ENCODE measurements at regions of chr18 and their contacts with region 1.

Region 1: GRCh38 chr18:58781627-58782194 is 83.0 kb upstream of the ZNF532 start:
- DNase-seq: peak; percentile 40
- H3K4me3 Mint-ChIP-seq: no peak overlapping the region
- H3K27ac Mint-ChIP-seq: no peak overlapping the region
- H3K4me1 Mint-ChIP-seq: no peaks in the 10 kb centered on the region
- H3K27me3 Mint-ChIP-seq: peaks cover 5% of the 10 kb centered on the region

Region 2: GRCh38 chr18:58325494-58325893 is 456.2 kb before region 1 on chr18:
- intact Hi-C with region 1: no loop called
- DNase-seq: no peak
- H3K4me3 Mint-ChIP-seq: no peak overlapping the region
- H3K27ac Mint-ChIP-seq: no peak overlapping the region
- H3K4me1 Mint-ChIP-seq: peaks cover 10% of the 10 kb centered on the region
- H3K27me3 Mint-ChIP-seq: peaks cover 12% of the 10 kb centered on the region

Region 3: DNA sequence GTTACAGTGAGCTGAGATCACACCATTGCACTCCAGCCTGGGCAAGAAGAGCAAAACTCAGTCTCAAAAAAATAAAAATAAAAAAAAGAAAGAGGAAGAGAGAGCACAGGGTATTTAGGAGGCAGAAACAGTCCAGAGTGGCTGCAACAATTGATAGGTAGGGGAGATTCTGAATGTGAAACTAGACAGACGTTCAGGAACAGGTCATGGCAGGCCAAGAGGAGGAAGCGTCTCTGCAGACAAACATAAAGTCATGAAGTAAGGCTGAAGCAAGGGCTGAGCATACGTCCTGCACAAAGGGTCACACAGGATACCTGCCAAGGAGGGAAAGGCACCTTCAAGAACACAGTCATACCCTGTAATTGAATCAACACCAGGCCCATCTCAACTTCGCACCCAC is 18.9 kb after region 1 on chr18:
- intact Hi-C with region 1: no loop called
- DNase-seq: no peak
- H3K4me3 Mint-ChIP-seq: no peak overlapping the region
- H3K27ac Mint-ChIP-seq: no peak overlapping the region
- H3K4me1 Mint-ChIP-seq: no peaks in the 10 kb centered on the region
- H3K27me3 Mint-ChIP-seq: peaks cover 10% of the 10 kb centered on the region

Region 4: GRCh38 chr18:59056706-59057492 is 275.2 kb after region 1 on chr18:
- intact Hi-C with region 1: loop called (anchors 1 kb)
- DNase-seq: peak; percentile 25
- H3K4me3 Mint-ChIP-seq: no peak overlapping the region
- H3K27ac Mint-ChIP-seq: no peak overlapping the region
- H3K4me1 Mint-ChIP-seq: no peaks in the 10 kb centered on the region
- H3K27me3 Mint-ChIP-seq: peaks cover 17% of the 10 kb centered on the region

Region 5: GRCh38 chr18:59070181-59070912 is 288.6 kb after region 1 on chr18:
- intact Hi-C with region 1: loop called (anchors 1 kb)
- DNase-seq: peak; percentile 54
- H3K4me3 Mint-ChIP-seq: no peak overlapping the region
- H3K27ac Mint-ChIP-seq: no peak overlapping the region
- H3K4me1 Mint-ChIP-seq: no peaks in the 10 kb centered on the region
- H3K27me3 Mint-ChIP-seq: peaks cover 11% of the 10 kb centered on the region